ENCODE measurements at regions of chr7 and their contacts with region 1.

Region 1: GRCh38 chr7:135801045-135801693 is 52.6 kb upstream of the FAM180A start:
- DNase-seq: peak; percentile 34
- H3K4me3 ChIP-seq: no peak overlapping the region
- H3K27ac ChIP-seq: no peak overlapping the region
- H3K27me3 ChIP-seq: no peaks in the 10 kb centered on the region
- CTCF ChIP-seq: peak; percentile 85

Region 2: DNA sequence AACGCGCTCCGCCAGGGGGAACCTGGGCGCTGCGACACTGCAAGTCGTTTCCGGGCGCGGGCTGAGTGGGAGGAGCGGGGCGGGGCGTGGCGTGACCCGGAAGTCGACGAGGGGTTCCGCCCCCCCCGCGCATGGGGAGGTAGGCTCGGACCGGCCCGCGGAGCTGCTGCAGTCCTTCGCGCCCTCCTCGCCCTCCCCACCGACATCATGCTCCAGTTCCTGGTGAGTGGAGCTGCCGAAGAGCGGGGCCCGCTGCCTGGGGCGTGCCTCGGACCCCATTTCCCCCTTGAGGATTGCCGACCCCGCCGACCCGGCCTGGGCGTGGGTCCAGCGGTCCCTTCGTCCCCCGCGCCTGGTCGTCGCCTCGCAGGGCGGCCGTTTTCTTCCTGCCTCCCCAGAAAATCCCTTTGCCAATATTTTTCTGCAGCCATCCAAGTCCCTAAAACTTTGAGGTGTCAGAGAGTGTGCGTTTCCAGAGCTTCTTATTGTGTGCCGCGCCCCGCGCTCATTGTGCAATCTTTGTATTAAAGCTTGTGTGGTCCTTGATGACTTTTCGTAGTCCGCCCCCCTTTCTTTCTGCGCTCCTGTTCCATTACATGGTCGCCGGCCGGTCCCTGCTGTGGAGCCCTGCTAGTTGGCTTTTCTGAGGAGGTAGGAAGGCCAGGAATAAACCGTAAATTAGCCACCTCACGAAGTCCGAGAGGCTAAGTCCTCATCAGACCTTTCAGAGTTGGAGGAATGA is 138.6 kb before region 1 on chr7 and contains the start of gene STMP1:
- CTCF ChIA-PET with region 1: interaction called, 11 read pairs
- POLR2A ChIA-PET with region 1: interaction called, 5 read pairs
- DNase-seq: peak; percentile 86
- H3K4me3 ChIP-seq: peak within 1 kb of the TSS; percentile 93
- H3K27ac ChIP-seq: peak within 1 kb of the TSS; percentile 98
- H3K27me3 ChIP-seq: no peaks in the 10 kb centered on the region
- CTCF ChIP-seq: peak; percentile 70
- polyA plus RNA-seq, gene STMP1: 39.3 and 48.2 TPM in 2 replicates

Region 3: DNA sequence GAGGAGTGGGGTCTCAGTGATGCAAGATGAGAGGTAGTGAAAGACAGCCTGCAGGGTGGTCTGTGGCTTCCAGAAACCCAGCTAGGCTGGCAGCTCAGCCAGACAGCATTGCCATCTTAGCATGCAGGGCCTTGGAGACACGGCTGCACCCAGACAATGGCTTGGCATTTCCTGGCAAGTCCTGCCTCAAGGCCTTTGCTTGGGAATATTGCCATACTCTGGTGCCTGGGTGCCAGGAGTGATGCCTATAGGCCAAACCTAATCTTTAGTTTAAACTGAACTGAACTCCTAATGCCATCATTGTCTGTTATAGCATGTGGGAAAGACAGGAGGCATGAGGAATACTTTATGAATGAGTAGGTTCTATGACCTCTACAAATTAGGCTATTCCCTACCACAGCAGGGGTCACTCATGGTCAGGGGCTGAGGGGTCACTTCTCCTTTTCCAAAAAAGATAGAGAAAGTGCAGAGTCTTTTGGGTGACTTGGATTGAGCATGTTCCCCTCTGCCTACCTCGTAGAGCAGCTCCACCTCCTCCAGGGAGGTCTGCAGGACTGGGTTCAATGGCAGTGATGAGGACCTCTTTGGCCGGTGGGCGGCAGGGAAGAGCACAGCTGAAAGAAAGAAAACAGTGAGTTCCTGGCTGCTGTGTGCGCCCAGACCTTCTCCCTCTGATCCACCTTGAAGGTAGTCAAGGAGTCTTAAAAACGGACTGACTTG is 64.4 kb before region 1 on chr7:
- CTCF ChIA-PET with region 1: no interaction called
- POLR2A ChIA-PET with region 1: no interaction called
- DNase-seq: no peak
- H3K4me3 ChIP-seq: no peak overlapping the region
- H3K27ac ChIP-seq: no peak overlapping the region
- H3K27me3 ChIP-seq: no peaks in the 10 kb centered on the region
- CTCF ChIP-seq: no peak

Region 4: DNA sequence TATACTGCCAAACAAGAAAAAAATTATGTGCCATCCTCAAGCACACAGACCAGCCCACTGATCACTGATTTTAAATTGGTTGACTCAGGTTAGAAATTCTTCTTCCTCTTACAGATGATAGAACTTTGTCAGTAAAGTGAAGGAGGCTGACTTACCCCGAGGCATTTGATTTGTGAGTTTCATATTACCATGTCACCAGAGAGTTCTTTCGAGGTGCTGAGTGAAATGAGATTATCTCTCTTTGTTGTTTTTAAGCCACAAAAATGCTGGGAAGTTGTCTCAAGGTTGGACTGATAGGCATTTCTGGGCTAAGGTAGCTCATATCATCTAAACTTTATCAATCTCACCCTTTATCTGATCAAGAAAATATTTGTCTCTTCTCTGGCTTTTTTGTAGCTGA is 26.2 kb after region 1 on chr7:
- CTCF ChIA-PET with region 1: interaction called, 12 read pairs
- POLR2A ChIA-PET with region 1: no interaction called
- DNase-seq: no peak
- H3K4me3 ChIP-seq: no peak overlapping the region
- H3K27ac ChIP-seq: no peak overlapping the region
- H3K27me3 ChIP-seq: peaks cover 13% of the 10 kb centered on the region
- CTCF ChIP-seq: no peak

Region 5: GRCh38 chr7:135993950-135994349 is 192.8 kb after region 1 on chr7:
- CTCF ChIA-PET with region 1: interaction called, 24 read pairs
- POLR2A ChIA-PET with region 1: no interaction called
- DNase-seq: no peak
- H3K4me3 ChIP-seq: no peak overlapping the region
- H3K27ac ChIP-seq: no peak overlapping the region
- H3K27me3 ChIP-seq: no peaks in the 10 kb centered on the region
- CTCF ChIP-seq: no peak

Region 6: DNA sequence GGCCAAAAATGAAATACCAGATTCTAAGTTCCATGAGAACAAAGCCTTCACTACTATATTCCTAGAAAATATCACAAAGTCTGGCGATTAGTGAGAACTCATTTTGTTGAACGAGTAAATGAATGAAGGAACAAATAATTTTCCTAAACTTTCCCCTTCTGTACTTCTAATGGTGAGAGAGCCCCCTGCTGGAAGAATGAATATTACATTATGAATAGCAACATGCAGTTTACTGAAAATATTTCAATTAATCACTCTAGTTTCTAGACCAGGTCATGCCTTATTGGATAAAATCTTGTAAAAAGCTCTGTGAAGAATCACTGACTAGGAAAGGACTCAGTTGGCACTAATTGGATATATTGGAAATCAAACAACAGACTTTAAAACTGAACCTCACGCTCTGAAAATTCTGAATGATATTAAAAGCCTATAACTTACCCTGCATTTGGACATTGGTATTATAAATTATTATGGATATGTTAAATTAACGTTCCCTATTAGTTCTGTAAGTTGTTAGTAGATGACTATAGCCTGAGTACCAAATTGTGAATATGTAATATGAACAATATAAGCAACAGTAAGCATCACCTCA is 208.4 kb after region 1 on chr7:
- CTCF ChIA-PET with region 1: interaction called, 175 read pairs
- POLR2A ChIA-PET with region 1: no interaction called
- DNase-seq: peak; percentile 13
- H3K4me3 ChIP-seq: no peak overlapping the region
- H3K27ac ChIP-seq: no peak overlapping the region
- H3K27me3 ChIP-seq: no peaks in the 10 kb centered on the region
- CTCF ChIP-seq: peak; percentile 70